ENCODE measurements at regions of chr22 and their contacts with region 1.

Region 1: GRCh38 chr22:29837780-29838598 is at the start of gene ASCC2:
- DNase-seq: peak; percentile 100
- total RNA-seq, gene ASCC2: 31.9 TPM

Region 2: GRCh38 chr22:29883045-29883774 is 45.2 kb after region 1 on chr22 and contains the start of gene MTMR3:
- intact Hi-C with region 1: loop called (anchors 5 kb)
- DNase-seq: peak; percentile 98
- total RNA-seq, gene MTMR3: 45.9 TPM